ENCODE measurements at regions of chr14 and their contacts with region 1.

Region 1: GRCh38 chr14:104563742-104564615 is 15.6 kb upstream of the C14orf180 start:
- DNase-seq: peak; percentile 95
- ATAC-seq: peak; percentile 95
- H3K4me3 Mint-ChIP-seq: no peak overlapping the region
- H3K27ac Mint-ChIP-seq: no peak overlapping the region
- H3K4me1 Mint-ChIP-seq: peaks cover 3% of the 10 kb centered on the region; the same call in 1 of the 2 replicates
- H3K27me3 Mint-ChIP-seq: no peaks in the 10 kb centered on the region
- CTCF ChIP-seq: peak; percentile 75

Region 2: GRCh38 chr14:104137297-104138097 is 426.5 kb before region 1 on chr14:
- CTCF ChIA-PET with region 1: interaction called, 21 read pairs
- POLR2A ChIA-PET with region 1: no interaction called
- DNase-seq: peak; percentile 79
- ATAC-seq: peak; percentile 42
- H3K4me3 Mint-ChIP-seq: peak overlapping the region; percentile 71
- H3K27ac Mint-ChIP-seq: no peak overlapping the region
- H3K4me1 Mint-ChIP-seq: peaks cover 25% of the 10 kb centered on the region
- H3K27me3 Mint-ChIP-seq: peaks cover 28% of the 10 kb centered on the region
- CTCF ChIP-seq: peak; percentile 82

Region 3: GRCh38 chr14:104370256-104370870 is 193.6 kb before region 1 on chr14:
- CTCF ChIA-PET with region 1: interaction called, 14 read pairs
- POLR2A ChIA-PET with region 1: no interaction called
- DNase-seq: peak; percentile 66
- ATAC-seq: peak; percentile 82
- H3K4me3 Mint-ChIP-seq: no peak overlapping the region
- H3K27ac Mint-ChIP-seq: no peak overlapping the region
- H3K4me1 Mint-ChIP-seq: peaks cover 4% of the 10 kb centered on the region; the same call in 1 of the 2 replicates
- H3K27me3 Mint-ChIP-seq: no peaks in the 10 kb centered on the region; the same call in 1 of the 2 replicates
- CTCF ChIP-seq: no peak

Region 4: GRCh38 chr14:104473649-104474494 is 90.1 kb before region 1 on chr14:
- CTCF ChIA-PET with region 1: interaction called, 20 read pairs
- POLR2A ChIA-PET with region 1: no interaction called
- DNase-seq: no peak
- ATAC-seq: peak; percentile 72
- H3K4me3 Mint-ChIP-seq: no peak overlapping the region
- H3K27ac Mint-ChIP-seq: no peak overlapping the region
- H3K4me1 Mint-ChIP-seq: 0 out of 2 replicates have a peak, but pooled peaks cover 4% of the 10 kb centered on the region
- H3K27me3 Mint-ChIP-seq: no peaks in the 10 kb centered on the region
- CTCF ChIP-seq: no peak

Region 5: DNA sequence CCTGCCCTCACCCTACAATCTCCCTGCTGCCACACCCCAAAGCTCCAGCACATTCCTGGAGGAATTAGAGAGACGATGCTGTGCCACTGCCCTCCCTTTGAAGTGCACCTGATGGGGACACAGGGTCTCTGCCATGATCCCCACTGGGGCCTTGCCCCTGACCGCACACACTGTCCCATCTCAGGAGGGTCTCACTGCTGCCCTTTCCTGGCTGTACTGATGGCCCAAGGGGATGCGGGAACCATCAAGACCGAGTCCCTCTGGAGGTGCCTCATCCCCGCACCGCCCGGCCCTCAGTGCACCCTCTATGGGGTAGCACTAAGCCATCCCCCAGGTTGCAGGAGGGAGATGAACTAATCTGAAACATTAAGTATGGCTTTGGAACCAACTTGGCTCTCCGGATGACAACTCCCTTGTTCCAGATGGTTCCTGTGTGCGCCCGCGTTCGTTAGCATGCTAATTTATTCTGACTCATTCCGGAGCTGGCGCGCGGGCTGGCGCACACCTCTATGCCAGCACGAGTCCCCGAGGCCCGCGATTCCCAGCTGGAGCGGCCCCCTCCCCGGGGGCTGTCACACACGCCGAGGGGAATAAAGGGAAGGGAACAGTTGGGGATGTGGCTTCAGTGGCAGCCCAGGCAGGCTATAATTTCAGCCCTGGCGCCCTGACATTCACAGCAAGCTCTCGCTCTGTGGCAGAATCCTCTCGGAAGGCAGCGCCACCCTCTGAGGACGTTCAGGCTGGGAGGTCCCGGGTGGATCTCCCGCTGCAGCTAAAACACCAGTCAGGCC is 18.6 kb before region 1 on chr14:
- CTCF ChIA-PET with region 1: interaction called, 14 read pairs
- POLR2A ChIA-PET with region 1: no interaction called
- DNase-seq: no peak
- ATAC-seq: no peak
- H3K4me3 Mint-ChIP-seq: no peak overlapping the region
- H3K27ac Mint-ChIP-seq: no peak overlapping the region
- H3K4me1 Mint-ChIP-seq: peaks cover 10% of the 10 kb centered on the region
- H3K27me3 Mint-ChIP-seq: no peaks in the 10 kb centered on the region; the same call in 1 of the 2 replicates
- CTCF ChIP-seq: no peak